Esophagus muscularis mucosa (tissue), 4 donors: ENCODE measurements at regions of chr1 and their contacts with region 1.

Region 1: DNA sequence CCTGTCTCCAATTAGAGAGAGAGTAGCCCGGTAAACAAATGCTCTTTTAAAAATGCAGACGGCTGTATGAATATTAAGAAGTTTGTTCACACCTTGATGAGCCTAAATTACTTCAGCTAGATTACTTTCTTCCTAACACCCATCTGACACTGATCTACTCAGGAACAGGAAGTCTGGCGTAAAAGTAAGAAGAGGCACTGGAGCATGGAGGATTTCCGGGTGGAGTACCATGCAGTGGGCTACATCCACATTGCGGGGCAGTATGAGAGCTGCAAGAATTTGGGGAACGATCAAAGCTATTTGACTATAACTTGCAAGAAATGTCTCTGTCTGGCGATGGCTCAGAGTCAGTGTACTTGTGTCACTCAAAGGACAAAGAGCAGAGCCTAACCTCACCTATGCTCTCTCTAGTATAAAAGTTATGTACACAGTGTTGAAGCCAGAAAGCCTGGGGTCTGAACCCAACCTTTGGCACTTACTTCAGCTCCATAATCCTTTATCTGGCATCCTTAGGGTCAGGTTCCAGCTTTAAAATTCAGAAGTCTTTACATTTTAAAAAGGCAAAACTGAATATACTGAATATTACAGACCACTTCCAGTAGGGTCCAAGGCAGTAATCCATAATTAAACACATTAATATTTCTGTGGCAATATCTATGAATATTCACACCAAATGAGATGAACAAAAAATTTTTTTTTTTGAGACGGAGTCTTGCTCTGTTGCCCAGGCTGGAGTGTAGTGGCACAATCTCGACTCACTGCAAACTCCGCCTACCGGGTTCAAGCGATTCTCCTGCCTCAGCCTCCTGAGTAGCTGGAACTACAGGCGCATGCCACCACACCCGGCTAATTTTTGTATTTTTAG is 7.9 kb upstream of the GNPAT start:
- DNase-seq: no peak
- H3K4me3 ChIP-seq: no peak overlapping the region
- H3K27ac ChIP-seq: no peak overlapping the region
- H3K4me1 ChIP-seq: peaks cover 0 to 16% (median 10%) of the 10 kb centered on the region in 4 donors
- H3K27me3 ChIP-seq: no peaks in the 10 kb centered on the region
- CTCF ChIP-seq: no peak
- EP300 ChIP-seq: no peak
- POLR2A ChIP-seq: no peak

Region 2: GRCh38 chr1:231170875-231171274 is 62.2 kb before region 1 on chr1:
- intact Hi-C with region 1: no loop called
- DNase-seq: no peak
- H3K4me3 ChIP-seq: no peak overlapping the region
- H3K27ac ChIP-seq: no peak overlapping the region
- H3K4me1 ChIP-seq: no peaks in the 10 kb centered on the region
- H3K27me3 ChIP-seq: peaks cover 0 to 71% (median 0%) of the 10 kb centered on the region in 4 donors
- CTCF ChIP-seq: no peak
- EP300 ChIP-seq: no peak
- POLR2A ChIP-seq: no peak

Region 3: GRCh38 chr1:231351816-231352215 is 118.7 kb after region 1 on chr1:
- intact Hi-C with region 1: no loop called
- DNase-seq: no peak
- H3K4me3 ChIP-seq: no peak overlapping the region
- H3K27ac ChIP-seq: no peak overlapping the region
- H3K4me1 ChIP-seq: no peaks in the 10 kb centered on the region
- H3K27me3 ChIP-seq: no peaks in the 10 kb centered on the region
- CTCF ChIP-seq: no peak
- EP300 ChIP-seq: no peak
- POLR2A ChIP-seq: no peak

Region 4: GRCh38 chr1:231528172-231529029 is 295.3 kb after region 1 on chr1 and contains the start of gene TSNAX:
- intact Hi-C with region 1: loop called (anchors 10 kb)
- DNase-seq: peak; percentile 97
- H3K4me3 ChIP-seq: peak within 1 kb of the TSS; percentile 63 to 83 (median 75)
- H3K27ac ChIP-seq: peak within 1 kb of the TSS; percentile 90 to 94 (median 92)
- H3K4me1 ChIP-seq: peaks cover 24 to 50% (median 47%) of the 10 kb centered on the region in 4 donors
- H3K27me3 ChIP-seq: no peaks in the 10 kb centered on the region
- CTCF ChIP-seq: no peak
- EP300 ChIP-seq: no peak
- POLR2A ChIP-seq: peak; percentile 83
- total RNA-seq, gene TSNAX: 20.4 to 29.6 (median 24.7) TPM

Region 5: GRCh38 chr1:231724876-231725724 is 492.0 kb after region 1 on chr1:
- intact Hi-C with region 1: no loop called
- DNase-seq: peak; percentile 89
- H3K4me3 ChIP-seq: no peak overlapping the region
- H3K27ac ChIP-seq: no peak overlapping the region
- H3K4me1 ChIP-seq: peaks cover 0 to 4% (median 0%) of the 10 kb centered on the region in 4 donors
- H3K27me3 ChIP-seq: no peaks in the 10 kb centered on the region
- CTCF ChIP-seq: peak in 1 of 3 experiments; percentile 8
- EP300 ChIP-seq: no peak
- POLR2A ChIP-seq: no peak